GM12878 (cell line): ENCODE measurements at regions of chr10 and their contacts with region 1.

Region 1: GRCh38 chr10:27223964-27224363 is 16.6 kb downstream of the ACBD5 start:
- DNase-seq: no peak
- ATAC-seq: peak; percentile 85
- H3K4me3 ChIP-seq: no peak overlapping the region
- H3K27ac ChIP-seq: no peak overlapping the region
- H3K4me1 ChIP-seq: no peaks in the 10 kb centered on the region
- H3K27me3 ChIP-seq: no peaks in the 10 kb centered on the region
- CTCF ChIP-seq: peak; percentile 40 to 64 (median 51)
- EP300 ChIP-seq: no peak
- POLR2A ChIP-seq: no peak
- RAD21 ChIP-seq: peak; percentile 51

Region 2: DNA sequence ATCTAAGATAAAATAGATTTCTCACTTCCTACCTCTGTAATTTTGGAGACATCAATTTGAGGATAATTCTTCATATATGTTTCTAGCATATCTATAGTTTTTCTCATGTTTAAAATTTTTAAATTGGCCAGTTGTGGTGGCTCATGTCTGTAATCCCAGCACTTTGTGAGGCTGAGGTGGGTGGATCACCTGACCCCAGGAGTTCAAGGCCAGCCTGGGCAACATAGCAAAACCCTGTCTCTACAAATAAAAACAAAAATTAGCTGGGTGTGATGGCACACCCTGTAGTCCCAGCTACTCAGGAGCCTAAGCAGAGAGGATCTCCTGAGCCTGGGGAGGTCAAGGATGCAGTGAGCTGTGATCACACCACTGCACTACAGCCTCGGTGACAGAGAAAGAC is 11.7 kb after region 1 on chr10:
- CTCF ChIA-PET with region 1: interaction called, 67 read pairs
- POLR2A ChIA-PET with region 1: interaction called, 3 read pairs
- RAD21 ChIA-PET with region 1: interaction called, 10 read pairs
- SMC1A ChIA-PET with region 1: interaction called, 7 read pairs
- in situ Hi-C with region 1: no loop called
- intact Hi-C with region 1: no loop called
- DNase-seq: no peak
- ATAC-seq: no peak
- H3K4me3 ChIP-seq: no peak overlapping the region
- H3K27ac ChIP-seq: no peak overlapping the region
- H3K4me1 ChIP-seq: no peaks in the 10 kb centered on the region
- H3K27me3 ChIP-seq: no peaks in the 10 kb centered on the region
- CTCF ChIP-seq: no peak
- EP300 ChIP-seq: no peak
- POLR2A ChIP-seq: no peak
- RAD21 ChIP-seq: no peak

Region 3: DNA sequence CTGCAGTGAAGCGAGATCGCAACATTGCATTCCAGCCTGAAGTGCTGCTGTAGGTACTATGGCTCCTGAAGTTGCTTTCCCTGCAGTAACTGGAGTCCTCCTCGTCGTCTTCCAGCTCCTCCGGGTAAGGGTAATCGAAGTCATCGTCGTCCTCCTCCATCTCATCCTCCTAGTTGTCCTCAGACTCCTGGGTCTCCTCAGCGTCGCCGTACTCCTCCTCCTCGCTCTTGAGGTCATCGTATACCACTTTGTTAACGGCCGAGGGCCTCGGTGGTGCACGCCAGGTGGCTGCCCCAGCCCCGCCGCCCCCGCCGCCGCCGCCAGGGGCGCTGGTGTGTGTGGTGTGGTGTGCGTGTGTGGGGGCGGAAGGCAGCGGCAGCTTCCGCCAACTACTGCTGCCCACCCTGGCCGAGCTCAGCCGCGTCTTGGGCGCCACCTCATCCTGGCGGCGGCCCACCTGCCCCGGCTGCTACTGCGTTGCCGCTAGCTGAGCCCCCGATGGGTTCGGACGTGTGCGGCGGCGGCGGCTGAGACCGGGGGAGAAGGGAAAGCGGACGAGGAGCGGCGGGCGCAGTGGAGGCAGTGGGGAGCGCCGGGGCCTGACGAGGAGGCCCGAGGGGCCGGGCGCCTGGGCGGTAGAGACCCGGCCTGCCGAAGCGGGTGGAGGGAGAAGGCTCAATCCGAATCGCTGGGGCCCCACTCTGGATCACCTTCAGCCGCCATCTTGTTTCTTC is 28.5 kb after region 1 on chr10:
- CTCF ChIA-PET with region 1: interaction called, 13 read pairs
- POLR2A ChIA-PET with region 1: no interaction called
- RAD21 ChIA-PET with region 1: interaction called, 3 read pairs
- SMC1A ChIA-PET with region 1: interaction called, 4 read pairs
- in situ Hi-C with region 1: no loop called
- intact Hi-C with region 1: no loop called
- DNase-seq: peak; percentile 27
- ATAC-seq: peak; percentile 100
- H3K4me3 ChIP-seq: peak overlapping the region; percentile 69
- H3K27ac ChIP-seq: peak overlapping the region; percentile 63
- H3K4me1 ChIP-seq: peaks cover 3% of the 10 kb centered on the region; the same call in 1 of the 2 replicates
- H3K27me3 ChIP-seq: no peaks in the 10 kb centered on the region
- CTCF ChIP-seq: peak; percentile 19 to 74 (median 46); a peak in 4 of 6 replicates
- EP300 ChIP-seq: no peak
- POLR2A ChIP-seq: peak; percentile 98
- RAD21 ChIP-seq: 0 out of 2 replicates have a peak, but pooled peaks have one; percentile 16